ENCODE measurements at regions of chr18 and their contacts with region 1.

Region 1: DNA sequence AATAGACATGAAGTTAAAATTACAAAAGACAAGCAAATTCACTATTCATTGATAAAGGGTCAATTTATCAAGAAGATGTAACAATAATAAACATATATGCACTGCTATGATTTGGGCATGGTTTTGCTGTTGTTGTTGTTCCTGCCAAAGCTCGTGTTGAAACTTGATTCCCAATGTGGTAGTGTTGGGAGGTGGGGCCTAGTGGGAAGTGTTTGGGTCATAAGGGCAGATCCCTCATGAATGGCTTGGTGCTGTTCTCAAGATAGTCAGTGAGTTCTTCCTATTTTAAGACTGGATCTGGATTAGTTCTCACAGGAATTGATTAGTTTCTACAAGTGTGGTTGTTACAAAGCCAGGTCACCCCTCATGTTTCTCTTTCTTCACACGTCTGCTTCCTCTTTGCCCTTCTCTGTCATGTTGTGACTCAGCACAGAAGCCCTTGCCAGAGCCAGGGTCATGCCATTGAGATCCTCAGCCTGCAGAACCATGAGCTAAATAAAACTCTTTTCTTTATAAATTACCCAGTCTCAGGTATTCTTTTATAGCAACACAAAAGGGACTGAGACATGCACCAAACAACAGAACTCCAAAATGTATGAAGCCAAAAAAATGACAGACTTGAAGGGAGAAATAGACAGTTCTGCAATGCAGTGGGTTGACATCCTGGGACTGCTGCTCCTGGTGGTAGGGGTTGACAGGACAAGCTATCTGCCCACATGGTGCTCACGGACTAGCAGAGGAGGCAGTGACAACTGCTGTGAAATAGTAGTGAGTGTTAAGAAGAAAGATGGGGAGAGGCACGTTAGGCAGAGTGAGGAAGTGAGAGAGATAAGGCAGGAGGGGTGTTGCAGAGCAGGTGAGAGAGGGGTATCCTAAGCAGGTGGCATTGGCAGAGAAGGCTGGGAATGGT is 18.6 kb upstream of the SKA1 start:
- DNase-seq: no peak
- ATAC-seq: peak; percentile 82
- H3K4me3 ChIP-seq: no peak overlapping the region
- H3K27ac ChIP-seq: no peak overlapping the region
- H3K4me1 ChIP-seq: no peaks in the 10 kb centered on the region
- H3K27me3 ChIP-seq: peaks cover 2% of the 10 kb centered on the region; the same call in 1 of the 2 replicates
- CTCF ChIP-seq: no peak

Region 2: DNA sequence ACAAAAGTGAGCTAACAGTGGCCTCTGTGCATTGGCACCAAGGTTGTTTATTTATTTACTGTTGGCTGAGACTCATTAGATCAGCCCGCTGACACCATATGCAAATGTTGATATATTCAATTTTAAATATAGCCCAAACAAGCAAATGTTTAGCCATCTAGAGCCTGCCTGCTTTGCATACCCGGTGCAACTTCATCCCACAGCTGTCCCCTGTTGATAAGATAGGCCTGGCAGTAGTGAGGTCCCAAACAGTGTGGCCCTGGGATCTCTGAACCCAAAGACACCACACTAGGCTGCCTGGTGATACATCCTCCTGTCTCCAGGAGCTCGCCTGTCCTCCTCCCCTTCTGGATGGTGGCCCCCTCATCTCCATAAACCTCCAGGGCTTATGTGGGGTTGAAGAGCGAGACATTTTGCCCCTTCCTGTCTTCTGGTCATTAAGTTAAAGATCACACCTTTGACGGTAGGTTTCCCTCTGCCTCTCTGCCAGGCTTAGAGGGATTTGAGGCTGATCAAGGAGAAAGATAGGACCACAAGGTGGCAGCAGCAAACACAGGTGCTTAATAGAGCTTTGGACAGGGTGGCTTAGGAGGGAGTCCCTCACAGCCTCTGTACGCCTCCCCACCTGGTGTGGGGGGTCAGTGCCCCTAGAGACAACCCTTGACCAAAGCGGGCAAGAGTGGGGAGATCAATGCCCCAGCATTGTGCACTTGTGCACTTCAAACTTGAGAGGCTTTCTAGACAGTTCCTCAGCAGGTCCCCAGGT is 137.7 kb before region 1 on chr18:
- CTCF ChIA-PET with region 1: interaction called, 4 read pairs
- POLR2A ChIA-PET with region 1: no interaction called
- in situ Hi-C with region 1: no loop called
- intact Hi-C with region 1: loop called (anchors 5 kb)
- DNase-seq: no peak
- ATAC-seq: no peak; the same call in 1 of the 2 replicates
- H3K4me3 ChIP-seq: no peak overlapping the region
- H3K27ac ChIP-seq: no peak overlapping the region
- H3K4me1 ChIP-seq: no peaks in the 10 kb centered on the region
- H3K27me3 ChIP-seq: no peaks in the 10 kb centered on the region; the same call in 1 of the 2 replicates
- CTCF ChIP-seq: peak; percentile 39

Region 3: GRCh38 chr18:50287441-50288347 is 68.6 kb before region 1 on chr18 and contains the start of gene CXXC1:
- CTCF ChIA-PET with region 1: no interaction called
- POLR2A ChIA-PET with region 1: interaction called, 4 read pairs
- in situ Hi-C with region 1: no loop called
- intact Hi-C with region 1: loop called (anchors 10 kb)
- DNase-seq: peak; percentile 95
- ATAC-seq: peak; percentile 95
- H3K4me3 ChIP-seq: peak within 1 kb of the TSS; percentile 88 to 91
- H3K27ac ChIP-seq: peak within 1 kb of the TSS; percentile 85
- H3K4me1 ChIP-seq: no peaks in the 10 kb centered on the region
- H3K27me3 ChIP-seq: no peaks in the 10 kb centered on the region
- CTCF ChIP-seq: no peak; the same call in 1 of the 2 replicates
- total RNA-seq, gene CXXC1: 60.8 TPM

Region 4: GRCh38 chr18:50330176-50330575 is 26.1 kb before region 1 on chr18:
- CTCF ChIA-PET with region 1: no interaction called
- POLR2A ChIA-PET with region 1: no interaction called
- in situ Hi-C with region 1: no loop called
- intact Hi-C with region 1: no loop called
- DNase-seq: no peak
- ATAC-seq: no peak
- H3K4me3 ChIP-seq: no peak overlapping the region
- H3K27ac ChIP-seq: no peak overlapping the region
- H3K4me1 ChIP-seq: no peaks in the 10 kb centered on the region
- H3K27me3 ChIP-seq: no peaks in the 10 kb centered on the region
- CTCF ChIP-seq: no peak

Region 5: GRCh38 chr18:50401888-50402287 is 45.6 kb after region 1 on chr18:
- CTCF ChIA-PET with region 1: no interaction called
- POLR2A ChIA-PET with region 1: no interaction called
- in situ Hi-C with region 1: no loop called
- intact Hi-C with region 1: no loop called
- DNase-seq: no peak
- ATAC-seq: no peak
- H3K4me3 ChIP-seq: no peak overlapping the region
- H3K27ac ChIP-seq: no peak overlapping the region
- H3K4me1 ChIP-seq: no peaks in the 10 kb centered on the region
- H3K27me3 ChIP-seq: no peaks in the 10 kb centered on the region
- CTCF ChIP-seq: no peak

Measured in Panc1 (cell line).